ENCODE measurements at regions of chr3 and their contacts with region 1.

Region 1: GRCh38 chr3:27712136-27713077 is 9.7 kb downstream of the EOMES start:
- DNase-seq: peak in 9 of 10 donors; percentile 56 to 84 (median 70)
- H3K4me3 ChIP-seq: peak overlapping the region; percentile 27 to 72 (median 55)
- H3K27ac ChIP-seq: no peak overlapping the region
- H3K27me3 ChIP-seq: peaks cover 9 to 81% (median 53%) of the 10 kb centered on the region in 45 donors
- CTCF ChIP-seq: peak; percentile 35 to 85 (median 75)

Region 2: GRCh38 chr3:28104896-28105534 is 392.6 kb after region 1 on chr3:
- intact Hi-C with region 1: no loop called
- DNase-seq: peak in 1 of 10 donors; percentile 62
- H3K4me3 ChIP-seq: no peak overlapping the region
- H3K27ac ChIP-seq: no peak overlapping the region
- H3K27me3 ChIP-seq: peaks cover 0 to 15% (median 0%) of the 10 kb centered on the region in 45 donors
- CTCF ChIP-seq: no peak

Region 3: DNA sequence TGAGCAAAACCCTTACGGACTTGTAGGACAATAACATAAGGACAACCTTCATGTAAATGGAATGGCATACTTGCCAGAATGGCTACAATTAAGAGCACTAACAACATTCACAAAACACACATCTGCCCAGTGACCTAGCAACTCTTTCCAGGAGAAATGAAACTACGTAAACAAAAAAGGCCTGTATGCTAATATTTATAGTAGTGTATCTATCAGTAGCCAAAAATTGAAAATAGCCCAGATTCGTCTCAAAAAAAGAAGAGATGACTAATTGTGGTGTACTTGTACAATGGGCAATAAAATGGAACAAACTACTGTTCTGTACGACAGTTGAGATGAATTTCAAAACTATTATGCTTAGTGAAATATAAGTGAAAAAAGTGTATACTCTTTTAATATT is 567.4 kb after region 1 on chr3:
- intact Hi-C with region 1: loop called in 1 of 2 experiments (anchors 5 kb)
- DNase-seq: no peak
- H3K4me3 ChIP-seq: no peak overlapping the region
- H3K27ac ChIP-seq: no peak overlapping the region
- H3K27me3 ChIP-seq: no peaks in the 10 kb centered on the region
- CTCF ChIP-seq: no peak

Region 4: GRCh38 chr3:28334552-28334951 is 622.1 kb after region 1 on chr3:
- intact Hi-C with region 1: loop called (anchors 5 kb)
- DNase-seq: no peak
- H3K4me3 ChIP-seq: no peak overlapping the region
- H3K27ac ChIP-seq: no peak overlapping the region
- H3K27me3 ChIP-seq: no peaks in the 10 kb centered on the region
- CTCF ChIP-seq: peak in 44 of 56 donors; percentile 14 to 55 (median 33)

Measured in dorsolateral prefrontal cortex (tissue), 120 donors.